ENCODE measurements at regions of chr18 and their contacts with region 1.

Region 1: DNA sequence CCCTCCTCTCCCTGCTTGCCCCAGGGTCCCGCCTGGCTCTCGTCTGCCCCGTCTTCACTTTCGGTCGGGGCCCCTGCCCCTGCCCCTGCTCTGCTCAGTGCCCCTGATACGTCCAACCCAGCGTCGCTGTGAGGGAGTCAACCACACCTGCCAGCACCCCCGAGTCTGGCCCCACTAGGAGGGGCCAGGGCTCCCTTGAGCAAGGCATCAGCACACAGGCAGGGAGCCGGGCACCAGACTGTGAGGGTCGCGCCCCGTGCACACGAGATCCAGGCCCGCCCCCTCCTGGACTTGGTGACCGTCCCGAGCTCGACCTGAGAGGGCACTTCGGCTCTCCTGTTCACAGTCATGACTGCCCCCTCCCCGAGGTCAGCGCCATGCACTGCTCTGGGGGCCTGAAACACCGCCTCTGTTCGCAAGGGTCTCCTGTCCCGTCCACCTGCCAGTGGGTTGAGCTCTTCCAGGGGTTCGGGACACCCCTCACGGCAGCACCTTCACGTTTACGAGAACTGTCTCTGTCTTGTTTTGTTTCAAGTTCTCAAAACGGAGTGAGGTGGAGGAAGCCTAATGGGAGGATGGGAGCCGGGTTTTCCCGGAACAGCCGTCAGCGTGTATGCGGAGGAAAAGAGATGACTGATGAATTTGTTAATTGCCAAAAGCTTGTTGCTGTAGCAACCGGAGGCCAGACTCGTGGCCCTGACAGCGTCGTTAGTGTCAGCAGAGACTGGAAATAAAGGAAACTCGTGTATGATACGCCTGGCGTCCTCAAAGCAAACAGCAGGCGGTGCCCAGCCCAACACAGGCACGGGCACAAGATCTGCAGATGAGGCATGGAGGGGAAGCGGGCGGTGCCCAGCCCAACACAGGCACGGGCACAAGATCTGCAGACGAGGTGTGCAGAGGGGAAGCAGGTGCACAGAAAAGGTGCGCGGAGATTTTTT is 48.2 kb upstream of the KCNG2 start:
- DNase-seq: no peak
- H3K4me3 ChIP-seq: no peak overlapping the region
- H3K27ac ChIP-seq: no peak overlapping the region
- H3K4me1 ChIP-seq: no peaks in the 10 kb centered on the region
- H3K27me3 ChIP-seq: no peaks in the 10 kb centered on the region
- CTCF ChIP-seq: no peak

Region 2: GRCh38 chr18:79687806-79688205 is 61.7 kb before region 1 on chr18:
- CTCF ChIA-PET with region 1: no interaction called
- dilution Hi-C with region 1: loop called (anchors 5 kb)
- in situ Hi-C with region 1: no loop called
- intact Hi-C with region 1: no loop called
- DNase-seq: peak; percentile 72
- H3K4me3 ChIP-seq: no peak overlapping the region
- H3K27ac ChIP-seq: no peak overlapping the region
- H3K4me1 ChIP-seq: no peaks in the 10 kb centered on the region
- H3K27me3 ChIP-seq: no peaks in the 10 kb centered on the region
- CTCF ChIP-seq: no peak

Region 3: DNA sequence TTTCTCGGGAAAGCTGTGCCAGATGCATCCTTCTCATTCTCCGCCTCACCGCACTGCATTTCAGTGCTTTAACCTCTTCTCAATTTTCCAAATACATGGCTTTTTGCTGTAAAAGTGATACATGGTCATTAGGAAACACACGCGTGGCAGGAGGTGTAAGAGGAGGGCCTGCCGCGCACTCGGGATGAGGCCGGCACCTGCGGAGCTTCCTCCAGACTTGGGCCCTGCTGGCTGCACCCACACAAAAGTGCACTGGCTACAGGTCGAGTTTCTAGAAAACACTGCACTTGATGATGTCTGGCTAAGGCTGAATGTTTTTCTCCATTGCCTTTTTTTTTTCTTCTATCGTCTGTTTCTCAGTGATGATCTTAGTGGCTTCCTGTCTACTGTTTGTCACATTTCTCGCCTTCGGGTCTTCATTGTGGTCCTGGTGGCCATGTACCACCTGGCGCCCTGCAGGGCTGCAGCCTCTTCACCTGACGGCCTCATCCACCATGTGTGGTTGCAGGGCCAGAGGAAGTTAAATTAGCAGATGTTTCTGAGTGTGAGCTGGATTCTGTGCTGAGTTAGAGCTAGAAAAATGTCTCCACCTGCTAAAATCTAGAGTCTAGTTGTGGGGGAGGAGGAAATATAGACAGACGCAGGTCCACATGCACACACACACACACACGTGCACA is 55.8 kb after region 1 on chr18:
- CTCF ChIA-PET with region 1: no interaction called
- dilution Hi-C with region 1: loop called (anchors 5 kb)
- in situ Hi-C with region 1: no loop called
- intact Hi-C with region 1: no loop called
- DNase-seq: no peak
- H3K4me3 ChIP-seq: no peak overlapping the region
- H3K27ac ChIP-seq: no peak overlapping the region
- H3K4me1 ChIP-seq: no peaks in the 10 kb centered on the region
- H3K27me3 ChIP-seq: no peaks in the 10 kb centered on the region
- CTCF ChIP-seq: no peak